Heart left ventricle (tissue), 16 donors: ENCODE measurements at regions of chr4 and their contacts with region 1.

Region 1: GRCh38 chr4:25870081-25870480 is 7.3 kb upstream of the SEL1L3 start:
- DNase-seq: no peak
- ATAC-seq: no peak
- H3K4me3 ChIP-seq: no peak overlapping the region
- H3K27ac ChIP-seq: no peak overlapping the region
- H3K4me1 ChIP-seq: no peaks in the 10 kb centered on the region
- H3K27me3 ChIP-seq: no peaks in the 10 kb centered on the region
- CTCF ChIP-seq: no peak
- POLR2A ChIP-seq: no peak

Region 2: DNA sequence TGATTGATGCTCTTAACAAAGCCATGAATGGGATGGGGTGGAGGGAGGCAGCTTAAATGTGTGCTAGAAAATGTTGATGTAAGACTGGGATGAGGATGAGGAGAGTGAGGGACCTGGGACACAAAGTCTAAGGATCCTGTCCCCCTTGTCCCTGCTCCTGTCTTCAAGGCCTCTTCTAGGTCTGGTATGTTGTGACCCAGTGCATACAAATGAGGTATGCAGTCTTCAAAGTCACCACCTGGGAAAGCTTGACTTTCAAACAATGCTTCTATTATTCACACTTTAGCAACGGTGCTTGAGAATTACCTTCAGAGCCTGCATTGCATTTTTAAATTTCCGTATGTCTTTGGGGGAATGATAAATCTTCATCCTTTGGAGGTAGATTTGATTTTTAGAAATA is 302.8 kb before region 1 on chr4:
- intact Hi-C with region 1: no loop called
- DNase-seq: no peak
- ATAC-seq: no peak
- H3K4me3 ChIP-seq: no peak overlapping the region
- H3K27ac ChIP-seq: no peak overlapping the region
- H3K4me1 ChIP-seq: no peaks in the 10 kb centered on the region
- H3K27me3 ChIP-seq: no peaks in the 10 kb centered on the region
- CTCF ChIP-seq: no peak
- POLR2A ChIP-seq: no peak

Region 3: DNA sequence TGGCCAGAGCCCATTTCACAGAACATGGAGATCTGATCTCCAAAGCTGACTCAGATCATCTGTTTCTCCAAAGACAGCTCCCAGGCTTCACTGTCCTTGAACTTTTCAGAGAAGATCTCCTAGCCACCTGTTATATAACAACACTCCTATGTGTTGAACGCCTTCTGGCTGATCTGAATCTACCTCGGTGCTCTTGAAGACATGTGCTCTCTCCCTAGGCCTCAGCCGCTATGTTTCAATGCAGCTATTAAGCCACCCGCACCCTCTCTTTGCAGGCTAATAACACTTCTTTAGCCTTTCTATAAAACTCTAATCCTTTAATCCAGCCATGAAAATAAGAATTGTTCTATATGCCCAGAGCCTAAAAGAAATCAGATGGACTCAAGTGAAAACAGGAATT is 42.2 kb before region 1 on chr4:
- intact Hi-C with region 1: loop called in 1 of 10 experiments (anchors 2 kb)
- DNase-seq: no peak
- ATAC-seq: no peak
- H3K4me3 ChIP-seq: no peak overlapping the region
- H3K27ac ChIP-seq: no peak overlapping the region
- H3K4me1 ChIP-seq: peaks cover 0 to 10% (median 5%) of the 10 kb centered on the region in 12 donors
- H3K27me3 ChIP-seq: no peaks in the 10 kb centered on the region
- CTCF ChIP-seq: no peak
- POLR2A ChIP-seq: no peak

Region 4: GRCh38 chr4:26032630-26033317 is 162.7 kb after region 1 on chr4:
- intact Hi-C with region 1: no loop called
- DNase-seq: no peak
- ATAC-seq: peak in 2 of 4 donors; percentile 12 to 43
- H3K4me3 ChIP-seq: no peak overlapping the region
- H3K27ac ChIP-seq: peak overlapping the region in 5 of 12 donors; percentile 24 to 52 (median 35)
- H3K4me1 ChIP-seq: peaks cover 0 to 37% (median 10%) of the 10 kb centered on the region in 12 donors
- H3K27me3 ChIP-seq: peaks cover 0 to 13% (median 0%) of the 10 kb centered on the region in 9 donors
- CTCF ChIP-seq: no peak
- POLR2A ChIP-seq: no peak